Head of caudate nucleus (tissue), 42 donors: ENCODE measurements at regions of chr1 and their contacts with region 1.

Region 1: GRCh38 chr1:226062558-226063223 is at the start of gene H3-3A:
- DNase-seq: peak; percentile 94 to 99 (median 97)

Region 2: GRCh38 chr1:225999227-225999911 is 63.3 kb before region 1 on chr1 and contains the start of gene SDE2:
- intact Hi-C with region 1: loop called (anchors 1 kb)
- DNase-seq: peak; percentile 97 to 100 (median 100)

Region 3: DNA sequence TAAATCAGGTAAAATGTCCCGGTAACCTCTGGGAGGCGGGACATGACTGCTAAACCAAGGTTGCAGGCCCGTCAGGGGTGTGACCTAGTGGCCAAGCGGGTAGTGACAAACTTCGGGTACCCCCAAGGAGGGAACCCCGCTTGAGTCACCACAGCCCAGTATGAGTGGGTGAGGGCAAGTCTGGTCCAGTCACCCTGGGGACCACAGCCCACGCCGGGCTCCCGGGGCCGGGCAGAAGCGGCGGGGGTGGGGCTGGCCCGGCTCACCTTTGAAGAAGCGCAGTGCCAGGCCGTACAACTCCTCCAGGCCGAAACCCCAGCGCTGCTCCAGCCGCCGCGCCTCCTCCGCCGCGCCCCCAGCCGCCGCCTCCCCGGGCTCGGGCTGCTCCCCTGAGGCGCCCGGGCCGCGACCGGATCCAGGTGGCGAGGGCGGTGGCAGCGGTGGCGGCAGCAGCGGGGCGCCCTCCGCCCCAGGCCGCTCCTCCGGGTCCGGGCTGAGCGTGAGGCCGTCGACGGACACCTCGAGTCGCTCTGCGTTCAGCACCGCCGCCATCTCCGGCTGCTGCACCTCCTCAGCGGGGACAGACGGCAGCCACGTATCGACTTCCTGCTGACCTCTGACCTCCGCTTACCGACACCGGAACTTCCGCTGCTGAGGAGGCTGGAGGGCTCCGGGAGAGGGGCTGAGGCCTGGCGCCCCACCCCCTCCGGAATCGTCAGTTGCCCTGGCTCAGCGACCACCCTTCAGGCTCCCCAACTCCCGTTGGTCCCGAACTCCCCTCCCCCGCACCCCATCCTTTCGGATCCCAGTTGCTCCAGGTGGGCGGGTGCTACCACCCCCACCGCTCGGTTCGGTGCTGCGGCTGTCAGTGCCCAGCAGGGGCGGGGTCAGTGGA is 123.7 kb after region 1 on chr1 and contains the start of gene ACBD3:
- intact Hi-C with region 1: loop called (anchors 5 kb)
- DNase-seq: peak; percentile 81 to 97 (median 91)

Region 4: DNA sequence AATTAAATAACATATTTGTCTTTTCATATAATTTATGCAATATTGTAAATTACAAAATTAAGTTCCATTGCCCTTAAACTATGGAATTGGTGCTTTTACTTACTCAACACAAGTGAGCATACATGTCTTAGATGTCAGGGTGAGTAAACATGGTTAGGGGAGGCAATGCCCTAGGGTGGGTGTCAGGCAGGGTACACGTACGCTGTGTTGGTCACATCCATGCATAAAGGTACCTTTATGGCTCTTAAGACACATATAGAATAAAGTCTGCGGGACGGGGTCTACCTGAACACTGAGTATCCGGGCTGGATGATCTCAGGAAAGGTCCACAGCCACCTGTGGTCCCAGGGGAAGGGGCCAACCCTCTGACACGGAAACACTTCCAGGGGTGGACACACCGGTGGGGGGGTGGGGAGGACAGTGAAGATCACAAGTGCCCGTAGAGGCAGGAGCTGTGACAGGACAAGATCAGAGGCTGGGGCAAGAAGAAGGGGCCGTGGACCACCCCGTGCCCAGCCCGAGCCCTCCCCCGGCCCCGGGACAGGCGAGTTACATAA is 245.6 kb after region 1 on chr1:
- intact Hi-C with region 1: no loop called
- DNase-seq: peak in 23 of 42 donors; percentile 2 to 56 (median 17)